ENCODE measurements at regions of chr19 and their contacts with region 1.

Region 1: GRCh38 chr19:12899891-12900518 is 9.0 kb downstream of the GCDH start:
- DNase-seq: no peak

Region 2: DNA sequence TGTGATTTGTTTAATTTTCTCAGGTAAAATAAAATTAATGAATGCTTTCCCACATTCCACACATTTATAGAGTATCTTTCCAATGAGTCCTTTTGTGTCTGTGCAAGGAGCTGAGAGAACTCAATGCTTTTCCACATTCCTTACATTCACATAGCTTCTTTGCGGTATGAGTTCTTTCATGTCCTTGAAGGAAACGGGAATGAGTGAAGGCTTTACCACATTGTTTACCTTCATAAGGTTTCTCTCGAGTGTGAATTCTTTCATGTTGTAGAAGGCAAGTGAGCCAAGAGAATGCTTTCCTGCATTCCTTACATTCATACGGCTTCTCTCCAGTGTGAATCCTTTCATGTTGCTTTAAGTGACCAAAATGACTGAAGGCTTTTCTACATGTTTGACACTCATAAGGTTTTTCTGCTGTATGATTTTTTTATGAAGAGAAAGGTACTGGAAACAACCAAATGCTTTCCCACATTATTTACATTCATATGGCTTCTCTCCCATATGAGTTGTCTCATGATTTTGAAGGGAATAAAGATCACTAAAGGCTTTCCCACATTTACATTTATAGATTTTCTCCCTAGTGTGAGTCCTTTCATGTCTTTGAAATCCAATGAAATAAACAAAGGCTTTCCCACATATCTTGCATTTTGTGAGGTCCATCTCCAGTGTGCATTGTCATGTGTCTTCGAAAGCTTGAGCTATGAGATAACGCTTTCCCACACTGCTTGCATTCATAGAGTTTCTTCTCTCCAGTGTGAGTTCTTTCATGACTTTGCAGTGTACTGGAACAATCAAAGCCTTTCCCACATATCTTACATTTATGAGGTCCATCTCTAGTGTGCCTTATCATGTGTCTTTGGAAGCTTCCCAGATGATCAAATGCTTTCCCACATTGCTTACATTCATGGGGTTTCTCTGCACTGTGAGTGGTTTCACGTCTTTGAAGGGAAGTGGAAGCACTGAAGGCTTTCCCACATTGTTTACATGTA is 520.0 kb before region 1 on chr19:
- intact Hi-C with region 1: loop called in 1 of 2 experiments (anchors 5 kb)
- DNase-seq: no peak